Naive thymus-derived CD8-positive, alpha-beta T cell (primary cell): ENCODE measurements at regions of chr7 and their contacts with region 1.

Region 1: DNA sequence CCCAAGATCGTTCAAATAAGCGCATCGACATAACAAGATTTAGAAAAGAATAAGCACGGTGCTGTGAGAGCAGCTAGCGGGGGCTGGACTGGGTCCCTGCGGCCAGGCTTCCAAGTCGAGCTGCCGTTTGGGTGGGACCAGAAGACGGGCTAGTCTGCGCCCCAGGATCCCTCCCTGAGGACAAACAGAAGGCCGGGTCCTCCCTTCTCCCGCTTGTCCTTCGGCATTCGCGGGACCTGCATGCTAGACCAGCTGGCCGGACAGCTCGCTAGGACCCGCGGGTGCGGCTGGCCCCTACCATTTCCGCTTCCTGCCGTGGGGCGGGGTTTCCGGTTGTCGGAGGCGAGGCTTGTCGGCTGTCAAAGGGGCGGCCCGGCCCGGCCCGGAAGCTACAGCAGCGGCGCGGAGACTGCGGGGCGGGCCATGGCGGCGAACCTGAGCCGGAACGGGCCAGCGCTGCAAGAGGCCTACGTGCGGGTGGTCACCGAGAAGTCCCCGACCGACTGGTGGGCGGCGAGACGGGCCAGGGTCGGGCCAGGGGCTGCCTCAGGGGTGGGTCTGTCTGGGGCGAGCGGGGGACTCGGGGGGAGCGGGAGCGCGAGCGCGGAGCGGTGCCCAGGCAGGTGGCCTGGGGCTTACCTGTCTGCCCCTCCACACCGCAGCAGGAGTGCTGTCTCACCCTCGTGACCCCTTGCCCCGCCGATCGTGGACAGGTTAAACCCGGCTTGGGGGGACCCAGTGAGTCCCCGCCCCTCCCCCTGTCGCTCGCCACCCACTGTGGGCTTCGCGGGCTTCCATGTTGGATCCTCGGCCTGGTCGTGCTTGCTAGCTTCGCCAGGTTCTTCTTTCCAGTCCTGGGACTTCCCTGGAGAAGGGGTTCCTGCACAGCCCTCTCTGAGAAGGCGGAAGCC is at the start of gene DBNL:
- DNase-seq: peak; percentile 75 to 90 (median 82)
- ATAC-seq: peak; percentile 63
- H3K4me3 Mint-ChIP-seq: peak within 1 kb of the TSS; percentile 82 to 96 (median 90)
- H3K27ac Mint-ChIP-seq: peak within 1 kb of the TSS; percentile 92 to 98 (median 97)
- H3K4me1 Mint-ChIP-seq: peaks cover 27 to 69% (median 52%) of the 10 kb centered on the region in 4 donors
- H3K27me3 Mint-ChIP-seq: no peaks in the 10 kb centered on the region
- polyA plus RNA-seq, gene DBNL: 180 to 222 (median 218) TPM

Region 2: DNA sequence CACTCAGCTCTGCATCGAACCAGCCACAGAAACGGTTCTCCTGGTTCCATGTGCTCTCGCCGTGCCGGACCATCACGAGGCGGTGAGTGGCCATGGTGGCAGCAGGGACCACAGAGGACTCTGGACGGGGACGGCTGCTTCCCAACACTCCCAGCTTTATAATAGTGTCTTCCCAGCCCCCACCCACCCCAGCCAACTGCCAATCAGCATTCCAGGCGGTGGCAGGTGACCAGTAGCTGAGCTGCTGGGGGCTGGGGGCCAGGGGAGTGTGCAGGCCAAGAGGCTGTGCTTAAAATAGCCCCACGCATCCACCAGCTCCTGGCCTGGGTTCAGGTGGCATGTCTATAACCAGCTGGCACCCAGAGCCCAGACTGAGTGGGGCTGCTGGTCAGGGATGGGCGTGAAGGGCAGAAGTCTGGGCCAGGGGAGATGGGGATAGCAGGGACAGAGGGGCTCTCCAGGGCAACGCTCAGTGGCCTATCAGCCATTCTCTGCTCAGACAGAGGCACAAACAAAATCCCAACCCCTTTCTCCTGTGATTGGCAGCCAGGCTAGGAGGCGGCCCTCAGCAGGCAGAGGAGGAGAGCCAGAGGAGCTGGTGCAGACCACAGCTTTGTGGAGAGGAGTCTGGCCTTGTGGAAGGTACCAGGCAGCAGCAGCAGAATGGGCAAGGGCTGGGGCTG is 21.0 kb after region 1 on chr7 and contains the start of gene PGAM2:
- POLR2A ChIA-PET with region 1: interaction called, 192 read pairs
- DNase-seq: no peak
- ATAC-seq: peak; percentile 44 to 60
- H3K4me3 Mint-ChIP-seq: peak within 1 kb of the TSS in 4 of 10 donors; percentile 26 to 54 (median 33)
- H3K27ac Mint-ChIP-seq: peak within 1 kb of the TSS; percentile 53 to 92 (median 77)
- H3K4me1 Mint-ChIP-seq: peaks cover 23 to 41% (median 38%) of the 10 kb centered on the region in 4 donors
- H3K27me3 Mint-ChIP-seq: no peaks in the 10 kb centered on the region
- polyA plus RNA-seq, gene PGAM2: not detected

Region 3: DNA sequence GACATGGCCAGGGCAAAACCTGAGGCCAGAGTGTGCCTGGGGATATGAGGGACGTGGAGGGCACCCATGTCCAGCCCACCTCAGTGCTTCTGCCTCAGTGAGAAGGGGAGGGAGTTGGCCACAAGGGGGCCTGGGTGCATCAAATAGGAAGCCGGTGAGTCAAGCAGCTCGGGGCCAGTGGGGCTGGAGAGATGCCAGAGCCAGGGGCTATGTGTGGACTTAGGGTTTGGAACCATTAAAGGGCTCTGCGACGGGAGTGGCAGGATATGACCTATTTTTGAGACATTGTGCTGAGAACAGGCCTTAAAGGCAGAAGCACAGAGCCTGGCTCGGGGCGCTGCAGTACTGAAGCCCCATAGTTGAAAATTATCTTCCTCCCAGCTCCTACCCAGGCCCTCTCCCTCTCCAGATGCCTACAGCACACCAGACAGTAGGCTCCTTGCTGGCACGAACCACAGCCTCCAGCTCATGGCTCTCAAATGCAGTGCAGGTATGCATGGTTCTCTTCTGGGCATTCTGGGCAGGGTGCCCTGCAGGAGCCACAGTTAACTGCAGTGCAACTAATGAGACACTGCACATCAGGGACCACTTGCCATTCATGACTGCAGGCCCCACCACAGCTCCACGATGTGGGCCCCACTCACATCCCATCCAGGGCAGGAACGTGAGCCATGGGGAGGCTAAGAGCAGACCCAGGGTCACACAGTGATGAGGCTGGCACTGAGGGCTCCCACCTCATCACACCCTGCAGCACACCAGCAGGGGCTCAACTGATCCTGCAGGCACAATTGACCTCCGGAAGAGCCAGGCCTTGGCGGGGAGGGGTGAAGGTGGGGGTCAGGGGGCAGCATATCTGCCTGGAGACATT is 28.0 kb after region 1 on chr7:
- POLR2A ChIA-PET with region 1: interaction called, 192 read pairs
- DNase-seq: peak in 5 of 10 donors; percentile 17 to 71 (median 39)
- ATAC-seq: peak; percentile 55
- H3K4me3 Mint-ChIP-seq: peak overlapping the region in 1 of 10 donors; percentile 74
- H3K27ac Mint-ChIP-seq: peak overlapping the region in 9 of 10 donors; percentile 7 to 87 (median 72)
- H3K4me1 Mint-ChIP-seq: peaks cover 12 to 51% (median 40%) of the 10 kb centered on the region in 4 donors
- H3K27me3 Mint-ChIP-seq: no peaks in the 10 kb centered on the region

Region 4: DNA sequence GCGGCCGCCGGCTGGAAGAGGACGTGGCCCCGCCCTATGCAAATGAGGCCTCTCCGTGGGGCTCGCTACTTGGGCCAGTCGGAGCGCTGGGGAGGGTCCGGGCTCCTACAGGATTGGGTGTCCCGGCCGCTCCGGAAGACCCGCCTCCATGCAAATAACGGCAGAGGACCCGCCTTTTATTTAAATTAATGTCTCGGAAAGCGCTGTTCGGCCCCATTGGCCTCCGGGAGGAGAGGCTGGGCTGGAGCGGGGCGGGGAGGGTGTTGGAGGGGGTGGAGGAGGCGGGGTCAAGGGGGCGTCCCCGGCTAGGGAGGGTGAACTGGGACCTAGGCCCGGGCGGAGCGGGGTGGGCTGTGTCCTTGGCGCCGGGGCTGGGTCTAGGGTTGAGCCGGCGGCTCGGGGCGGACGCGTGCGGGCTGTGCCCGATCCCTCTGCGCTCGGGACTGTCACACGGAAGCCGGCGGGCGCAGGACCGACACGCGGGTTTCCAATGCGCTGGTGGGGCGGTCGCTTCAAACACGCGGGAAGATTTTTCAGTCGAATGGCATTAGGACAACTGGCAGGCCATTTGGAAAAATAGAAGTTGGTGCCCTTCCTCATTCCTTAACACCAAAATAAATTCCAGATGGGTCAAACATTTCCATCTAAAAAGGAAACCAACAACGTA is 38.1 kb after region 1 on chr7:
- POLR2A ChIA-PET with region 1: interaction called, 29 read pairs
- DNase-seq: peak; percentile 88 to 99 (median 98)
- ATAC-seq: peak; percentile 90 to 93
- H3K4me3 Mint-ChIP-seq: peak overlapping the region; percentile 80 to 94 (median 87)
- H3K27ac Mint-ChIP-seq: peak overlapping the region; percentile 25 to 95 (median 88)
- H3K4me1 Mint-ChIP-seq: peaks cover 13 to 44% (median 30%) of the 10 kb centered on the region in 4 donors
- H3K27me3 Mint-ChIP-seq: no peaks in the 10 kb centered on the region

Region 5: GRCh38 chr7:44200647-44201461 is 156.3 kb after region 1 on chr7 and contains the start of gene YKT6:
- POLR2A ChIA-PET with region 1: interaction called, 11 read pairs
- DNase-seq: peak; percentile 83 to 97 (median 92)
- ATAC-seq: peak; percentile 97 to 99
- H3K4me3 Mint-ChIP-seq: peak within 1 kb of the TSS; percentile 78 to 92 (median 84)
- H3K27ac Mint-ChIP-seq: peak within 1 kb of the TSS; percentile 23 to 91 (median 76)
- H3K4me1 Mint-ChIP-seq: peaks cover 22 to 38% (median 28%) of the 10 kb centered on the region in 4 donors
- H3K27me3 Mint-ChIP-seq: peaks cover 0 to 5% (median 0%) of the 10 kb centered on the region in 5 donors
- polyA plus RNA-seq, gene YKT6: 31.6 to 37.0 (median 34.2) TPM